Activated CD4-positive, alpha-beta T cell treated with anti-CD3 and anti-CD28 coated beads, Interleukin-2, amount 10 ng/mL, durations not matched to agents 24 days and 14 days (primary cell): ENCODE measurements at regions of chr11 and their contacts with region 1.

Region 1: DNA sequence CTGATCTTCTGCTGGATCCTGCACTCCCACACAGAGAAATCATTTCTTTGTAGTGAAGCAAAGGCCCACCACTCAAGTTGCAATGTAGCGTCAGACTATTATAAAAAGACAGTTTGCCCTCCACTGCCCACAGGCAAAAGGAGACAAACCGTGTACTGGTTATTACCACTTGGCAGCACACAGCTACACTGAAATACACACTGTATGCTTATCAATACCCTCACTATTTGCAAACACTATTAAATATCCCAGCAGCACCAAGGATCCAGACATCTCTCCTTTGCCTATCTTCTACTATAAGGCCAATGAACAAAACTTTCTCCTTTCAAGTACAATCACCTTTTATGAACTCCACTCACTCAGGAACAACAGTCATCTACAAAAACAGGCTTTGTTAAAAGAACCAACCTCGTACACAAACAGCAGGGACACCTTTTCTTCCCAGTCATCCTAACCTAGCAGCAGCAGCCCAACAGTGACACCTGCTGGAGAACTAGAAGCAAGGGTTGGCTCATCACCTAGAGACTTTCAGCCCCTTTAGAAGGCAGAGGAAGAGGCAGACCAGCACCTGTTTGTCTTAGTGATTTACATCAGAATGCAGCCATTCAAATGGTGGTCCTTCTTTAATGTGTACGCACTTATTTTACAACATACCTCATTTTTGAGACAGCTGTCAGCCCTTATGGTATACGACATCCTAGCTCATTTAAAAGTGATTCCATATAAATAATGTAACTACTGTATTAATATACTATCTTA is 56.1 kb downstream of the AMBRA1 start:
- DNase-seq: peak; percentile 89
- H3K4me3 Mint-ChIP-seq: no peak overlapping the region
- H3K27ac Mint-ChIP-seq: no peak overlapping the region
- H3K4me1 Mint-ChIP-seq: peaks cover 5% of the 10 kb centered on the region
- H3K27me3 Mint-ChIP-seq: no peaks in the 10 kb centered on the region

Region 2: DNA sequence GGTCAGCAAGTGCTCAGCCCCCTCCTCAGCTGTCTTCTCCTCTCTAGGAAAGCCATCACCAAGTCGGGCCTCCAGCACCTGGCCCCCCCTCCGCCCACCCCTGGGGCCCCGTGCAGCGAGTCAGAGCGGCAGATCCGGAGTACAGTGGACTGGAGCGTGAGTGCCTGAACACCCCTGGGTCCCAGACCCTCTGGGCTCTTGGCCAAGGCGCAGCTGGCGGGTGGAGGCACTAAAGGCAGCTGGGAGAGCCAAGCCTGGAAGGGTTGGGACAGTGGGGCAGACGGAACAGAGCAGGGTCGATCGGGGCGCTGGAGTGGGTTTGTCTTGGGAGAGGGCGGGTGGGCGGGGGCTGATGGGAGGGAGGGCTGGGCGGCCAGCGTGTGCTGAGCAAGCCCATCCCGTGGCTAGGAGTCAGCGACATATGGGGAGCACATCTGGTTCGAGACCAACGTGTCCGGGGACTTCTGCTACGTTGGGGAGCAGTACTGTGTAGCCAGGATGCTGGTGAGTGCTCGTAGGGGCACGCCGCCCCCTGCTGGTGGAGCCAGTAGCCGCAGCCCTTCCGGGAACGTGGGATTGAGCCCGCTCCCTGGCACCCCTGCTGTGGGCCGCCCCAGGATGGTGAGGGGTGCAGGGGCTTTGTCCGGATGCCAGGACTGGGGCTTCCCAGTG is 170.3 kb before region 1 on chr11:
- intact Hi-C with region 1: loop called (anchors 1 kb)
- DNase-seq: peak; percentile 92
- H3K4me3 Mint-ChIP-seq: no peak overlapping the region
- H3K27ac Mint-ChIP-seq: peak overlapping the region; percentile 71
- H3K4me1 Mint-ChIP-seq: peaks cover 17% of the 10 kb centered on the region
- H3K27me3 Mint-ChIP-seq: no peaks in the 10 kb centered on the region

Region 3: GRCh38 chr11:46489661-46490560 is 47.8 kb before region 1 on chr11:
- intact Hi-C with region 1: loop called (anchors 1 kb)
- DNase-seq: peak; percentile 79
- H3K4me3 Mint-ChIP-seq: no peak overlapping the region
- H3K27ac Mint-ChIP-seq: no peak overlapping the region
- H3K4me1 Mint-ChIP-seq: peaks cover 9% of the 10 kb centered on the region
- H3K27me3 Mint-ChIP-seq: no peaks in the 10 kb centered on the region

Region 4: DNA sequence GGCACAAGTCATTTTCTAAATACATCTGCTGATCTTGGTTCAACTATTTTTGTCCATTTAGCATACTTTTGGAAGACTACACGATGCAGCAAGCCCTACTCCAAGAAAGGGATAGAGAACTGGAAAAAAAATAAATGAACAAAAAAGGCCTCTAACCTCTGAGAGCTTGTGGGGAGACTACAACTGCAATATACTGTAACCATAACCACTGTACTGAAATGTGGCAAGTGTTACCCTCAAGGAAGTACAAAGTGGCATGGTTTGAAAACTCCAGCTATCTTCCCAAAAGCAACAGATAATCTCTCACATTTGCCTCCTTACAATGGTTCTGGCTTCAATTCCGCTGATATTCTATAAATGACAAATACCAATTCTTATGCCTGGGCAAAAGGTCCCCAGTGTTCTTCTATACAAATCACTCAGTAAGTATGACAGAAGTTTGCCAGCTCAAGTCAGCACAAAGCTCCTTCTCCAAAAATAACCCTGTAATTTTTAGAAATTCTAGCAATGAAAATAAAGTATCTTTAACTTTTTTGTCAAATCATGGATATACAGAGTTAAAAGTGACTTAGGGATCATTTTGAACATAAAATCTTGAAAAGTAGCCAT is 33.2 kb after region 1 on chr11:
- intact Hi-C with region 1: no loop called
- DNase-seq: no peak
- H3K4me3 Mint-ChIP-seq: no peak overlapping the region
- H3K27ac Mint-ChIP-seq: peak overlapping the region; percentile 48
- H3K4me1 Mint-ChIP-seq: peaks cover 15% of the 10 kb centered on the region
- H3K27me3 Mint-ChIP-seq: no peaks in the 10 kb centered on the region

Region 5: GRCh38 chr11:46625391-46625790 is 87.7 kb after region 1 on chr11:
- intact Hi-C with region 1: no loop called
- DNase-seq: no peak
- H3K4me3 Mint-ChIP-seq: no peak overlapping the region
- H3K27ac Mint-ChIP-seq: no peak overlapping the region
- H3K4me1 Mint-ChIP-seq: peaks cover 11% of the 10 kb centered on the region
- H3K27me3 Mint-ChIP-seq: no peaks in the 10 kb centered on the region